Heart right ventricle (tissue), 16 donors: ENCODE measurements at regions of chr14 and their contacts with region 1.

Region 1: GRCh38 chr14:55446218-55446654 is 5.8 kb upstream of the TBPL2 start:
- DNase-seq: peak in 1 of 2 donors; percentile 77
- ATAC-seq: peak; percentile 45 to 78 (median 64)
- H3K4me3 ChIP-seq: no peak overlapping the region
- H3K27ac ChIP-seq: peak overlapping the region in 1 of 10 donors; percentile 26
- H3K4me1 ChIP-seq: peaks cover 0 to 35% (median 10%) of the 10 kb centered on the region in 9 donors
- H3K27me3 ChIP-seq: no peaks in the 10 kb centered on the region
- CTCF ChIP-seq: peak; percentile 48 to 72 (median 67)

Region 2: DNA sequence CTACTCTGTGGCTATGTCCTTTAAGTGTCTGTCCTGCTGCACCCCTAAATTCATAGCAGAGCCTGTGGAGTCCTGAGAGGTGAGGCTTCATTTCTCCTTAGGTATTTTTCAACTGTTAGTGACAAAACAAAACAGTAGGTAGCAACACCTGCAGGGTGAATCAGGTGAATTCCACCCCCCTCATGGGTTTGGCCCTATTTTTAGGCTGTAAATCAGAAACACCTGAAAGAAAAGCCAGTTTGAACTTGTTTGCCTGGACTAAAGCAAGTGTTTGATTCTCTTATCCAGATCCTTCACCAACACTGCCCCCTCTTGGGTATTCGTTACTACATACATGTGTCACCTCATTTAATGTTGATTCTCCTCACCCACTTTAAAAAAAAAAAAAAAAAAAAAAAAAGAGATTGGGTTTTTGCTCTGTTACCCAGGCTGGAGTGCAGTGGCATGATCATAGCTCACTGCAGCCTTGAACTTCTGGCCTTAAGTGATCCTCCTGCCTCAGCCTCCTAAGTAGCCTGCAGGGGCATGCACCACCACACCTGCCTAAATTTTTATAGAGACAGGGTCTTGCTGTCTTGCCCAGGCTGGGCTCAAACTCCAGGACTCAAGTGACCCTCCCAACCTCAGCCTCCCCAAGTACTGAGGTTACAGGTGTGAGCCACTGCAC is 16.1 kb before region 1 on chr14:
- intact Hi-C with region 1: no loop called
- DNase-seq: peak in 1 of 2 donors; percentile 51
- ATAC-seq: peak in 7 of 8 donors; percentile 46 to 86 (median 75)
- H3K4me3 ChIP-seq: no peak overlapping the region
- H3K27ac ChIP-seq: no peak overlapping the region
- H3K4me1 ChIP-seq: peaks cover 0 to 5% (median 0%) of the 10 kb centered on the region in 9 donors
- H3K27me3 ChIP-seq: no peaks in the 10 kb centered on the region
- CTCF ChIP-seq: peak in 7 of 9 donors; percentile 39 to 54 (median 47)

Region 3: GRCh38 chr14:55579724-55580469 is 133.7 kb after region 1 on chr14 and contains the start of gene KTN1:
- intact Hi-C with region 1: loop called in 7 of 10 experiments (anchors 5 to 10 kb)
- DNase-seq: peak; percentile 85 to 87
- ATAC-seq: peak; percentile 91 to 96 (median 94)
- H3K4me3 ChIP-seq: peak within 1 kb of the TSS; percentile 77 to 99 (median 88)
- H3K27ac ChIP-seq: peak within 1 kb of the TSS; percentile 88 to 99 (median 97)
- H3K4me1 ChIP-seq: peaks cover 0 to 51% (median 39%) of the 10 kb centered on the region in 9 donors
- H3K27me3 ChIP-seq: no peaks in the 10 kb centered on the region
- CTCF ChIP-seq: no peak
- total RNA-seq, gene KTN1: 205 to 293 (median 254) TPM

Region 4: DNA sequence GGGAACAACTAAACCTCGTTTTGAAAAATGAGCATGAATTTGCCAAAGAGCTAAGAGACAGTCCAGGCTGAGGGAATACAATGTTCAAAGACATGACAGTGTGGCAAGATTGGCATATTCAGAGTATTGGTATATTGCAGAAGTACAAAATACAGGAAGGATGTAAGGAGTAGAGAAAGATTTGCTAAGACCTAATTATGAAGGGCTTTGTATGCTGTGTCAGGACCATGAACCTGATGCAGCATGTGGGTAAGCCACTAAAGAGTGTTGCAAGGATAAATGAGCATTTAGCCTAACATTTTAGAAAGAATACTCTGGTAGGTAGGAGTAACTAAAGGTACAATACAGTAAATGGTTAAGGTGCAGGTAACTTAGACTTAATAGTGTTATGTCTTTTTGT is 198.9 kb after region 1 on chr14:
- intact Hi-C with region 1: loop called in 1 of 10 experiments (anchors 10 kb)
- DNase-seq: no peak
- ATAC-seq: peak in 3 of 8 donors; percentile 11 to 25 (median 12)
- H3K4me3 ChIP-seq: no peak overlapping the region
- H3K27ac ChIP-seq: no peak overlapping the region
- H3K4me1 ChIP-seq: peaks cover 0 to 30% (median 8%) of the 10 kb centered on the region in 9 donors
- H3K27me3 ChIP-seq: no peaks in the 10 kb centered on the region
- CTCF ChIP-seq: no peak

Region 5: GRCh38 chr14:55665067-55665675 is 218.9 kb after region 1 on chr14:
- intact Hi-C with region 1: loop called in 1 of 10 experiments (anchors 10 kb)
- DNase-seq: no peak
- ATAC-seq: no peak
- H3K4me3 ChIP-seq: no peak overlapping the region
- H3K27ac ChIP-seq: no peak overlapping the region
- H3K4me1 ChIP-seq: peaks cover 0 to 27% (median 0%) of the 10 kb centered on the region in 9 donors
- H3K27me3 ChIP-seq: no peaks in the 10 kb centered on the region
- CTCF ChIP-seq: no peak

Region 6: GRCh38 chr14:55689981-55690863 is 244.0 kb after region 1 on chr14:
- intact Hi-C with region 1: loop called in 1 of 10 experiments (anchors 5 kb)
- DNase-seq: no peak
- ATAC-seq: no peak
- H3K4me3 ChIP-seq: no peak overlapping the region
- H3K27ac ChIP-seq: no peak overlapping the region
- H3K4me1 ChIP-seq: peaks cover 0 to 3% (median 0%) of the 10 kb centered on the region in 9 donors
- H3K27me3 ChIP-seq: no peaks in the 10 kb centered on the region
- CTCF ChIP-seq: no peak

Region 7: DNA sequence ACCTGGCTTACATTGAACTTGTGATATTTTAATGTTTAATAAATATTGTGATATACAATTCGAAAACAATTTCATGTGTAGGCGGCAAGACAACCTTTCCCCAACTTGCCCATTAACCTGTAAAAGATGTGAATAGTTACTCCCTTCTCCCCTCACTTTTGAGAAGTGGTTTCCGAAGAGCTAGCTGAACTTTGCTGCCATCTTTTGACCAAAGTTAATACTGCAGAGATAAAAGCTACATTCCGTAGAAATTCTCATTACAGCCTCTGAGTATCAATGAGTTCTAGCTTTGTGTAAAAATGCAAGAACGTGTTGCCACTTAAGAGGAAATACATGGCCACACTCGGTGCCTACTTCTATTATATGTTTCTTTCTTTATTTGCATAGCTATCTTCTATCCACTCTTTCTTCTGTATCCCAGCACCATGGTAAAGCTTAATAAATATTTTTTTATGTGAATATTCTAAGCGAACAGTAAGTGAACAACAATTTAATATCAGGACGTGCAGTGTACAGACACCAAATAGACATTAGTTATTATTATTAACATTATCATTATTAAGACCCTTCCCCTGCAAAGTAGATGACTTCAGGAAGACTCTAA is 1028.3 kb after region 1 on chr14:
- intact Hi-C with region 1: loop called in 5 of 10 experiments (anchors 5 to 10 kb)
- DNase-seq: no peak
- ATAC-seq: peak in 2 of 8 donors; percentile 16 to 56
- H3K4me3 ChIP-seq: no peak overlapping the region
- H3K27ac ChIP-seq: no peak overlapping the region
- H3K4me1 ChIP-seq: no peaks in the 10 kb centered on the region
- H3K27me3 ChIP-seq: peaks cover 0 to 6% (median 0%) of the 10 kb centered on the region in 7 donors
- CTCF ChIP-seq: peak; percentile 71 to 92 (median 84)